RWPE1 (cell line): ENCODE measurements at regions of chr19 and their contacts with region 1.

Region 1: DNA sequence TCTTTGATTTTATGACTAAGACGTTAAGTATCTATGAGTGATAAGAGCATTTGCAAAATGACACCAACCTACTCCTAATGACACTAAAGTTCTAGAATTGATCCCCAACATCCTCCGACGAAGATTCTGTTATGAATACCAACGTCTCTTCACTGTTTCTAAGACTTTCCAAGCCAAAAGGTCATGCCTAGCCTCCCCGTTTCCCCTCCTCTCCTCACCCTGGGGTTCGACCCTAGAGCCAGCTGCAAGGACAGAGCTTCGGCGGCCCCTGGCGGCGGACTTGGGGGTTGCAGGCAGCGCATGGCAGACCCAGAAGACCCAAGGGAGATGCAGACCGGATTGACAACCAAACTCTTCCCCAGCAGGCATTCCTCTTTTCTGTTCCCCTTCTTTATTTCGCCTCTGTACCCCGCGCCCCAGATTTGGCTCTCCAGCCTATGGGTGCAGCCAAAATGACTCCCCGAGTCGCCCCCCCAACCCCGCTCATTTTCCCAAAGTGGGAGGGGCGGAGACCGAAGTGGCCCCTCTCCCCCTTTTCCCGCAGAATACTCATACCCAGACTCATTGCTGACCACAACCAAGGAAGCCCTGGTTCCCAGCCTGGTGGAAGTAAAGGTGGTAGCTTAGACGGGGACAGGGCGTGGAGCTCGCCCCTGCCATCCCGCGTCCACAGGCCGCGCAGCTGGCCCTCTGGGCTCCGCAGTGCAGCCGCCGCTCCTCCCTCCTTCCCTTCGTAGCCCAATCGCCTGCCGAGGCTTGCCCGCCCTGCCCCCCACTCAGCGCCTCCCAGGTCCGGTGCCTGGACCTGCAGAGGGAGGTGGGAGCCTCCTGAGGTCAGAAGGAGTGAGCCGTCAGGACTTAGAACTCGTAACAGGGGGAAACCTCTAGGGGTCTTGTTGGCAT is 4.1 kb upstream of the EML2 start:
- DNase-seq: peak; percentile 70
- H3K27ac ChIP-seq: peak overlapping the region; percentile 99
- CTCF ChIP-seq: peak; percentile 97

Region 2: GRCh38 chr19:45528651-45529419 is 114.4 kb before region 1 on chr19:
- CTCF ChIA-PET with region 1: interaction called, 19 read pairs
- POLR2A ChIA-PET with region 1: no interaction called
- DNase-seq: peak; percentile 93
- H3K27ac ChIP-seq: peak overlapping the region; percentile 92
- CTCF ChIP-seq: peak; percentile 46

Region 3: GRCh38 chr19:45607071-45608029 is 35.9 kb before region 1 on chr19:
- CTCF ChIA-PET with region 1: interaction called, 10 read pairs
- POLR2A ChIA-PET with region 1: interaction called, 3 read pairs
- DNase-seq: peak; percentile 36
- H3K27ac ChIP-seq: peak overlapping the region; percentile 67
- CTCF ChIP-seq: peak; percentile 92